BJ (cell line): ENCODE measurements at regions of chr1 and their contacts with region 1.

Region 1: GRCh38 chr1:51926171-51926812 is 47.8 kb upstream of the NRDC start:
- DNase-seq: no peak
- H3K4me3 ChIP-seq: no peak overlapping the region
- H3K27me3 ChIP-seq: no peaks in the 10 kb centered on the region
- CTCF ChIP-seq: peak; percentile 48

Region 2: GRCh38 chr1:51897699-51898031 is 28.6 kb before region 1 on chr1:
- CTCF ChIA-PET with region 1: interaction called, 82 read pairs
- POLR2A ChIA-PET with region 1: interaction called, 10 read pairs
- DNase-seq: peak; percentile 83
- H3K4me3 ChIP-seq: no peak overlapping the region
- H3K27me3 ChIP-seq: no peaks in the 10 kb centered on the region
- CTCF ChIP-seq: no peak

Region 3: GRCh38 chr1:51906306-51907078 is 19.8 kb before region 1 on chr1:
- CTCF ChIA-PET with region 1: interaction called, 10 read pairs
- POLR2A ChIA-PET with region 1: no interaction called
- DNase-seq: no peak
- H3K4me3 ChIP-seq: no peak overlapping the region
- H3K27me3 ChIP-seq: no peaks in the 10 kb centered on the region
- CTCF ChIP-seq: no peak

Region 4: GRCh38 chr1:51915951-51916350 is 10.3 kb before region 1 on chr1:
- CTCF ChIA-PET with region 1: interaction called, 10 read pairs
- POLR2A ChIA-PET with region 1: no interaction called
- DNase-seq: no peak
- H3K4me3 ChIP-seq: no peak overlapping the region
- H3K27me3 ChIP-seq: no peaks in the 10 kb centered on the region
- CTCF ChIP-seq: no peak

Region 5: GRCh38 chr1:52002038-52002917 is 76.0 kb after region 1 on chr1:
- CTCF ChIA-PET with region 1: interaction called, 10 read pairs
- POLR2A ChIA-PET with region 1: no interaction called
- DNase-seq: peak; percentile 63
- H3K4me3 ChIP-seq: no peak overlapping the region
- H3K27me3 ChIP-seq: no peaks in the 10 kb centered on the region
- CTCF ChIP-seq: peak; percentile 87

Region 6: DNA sequence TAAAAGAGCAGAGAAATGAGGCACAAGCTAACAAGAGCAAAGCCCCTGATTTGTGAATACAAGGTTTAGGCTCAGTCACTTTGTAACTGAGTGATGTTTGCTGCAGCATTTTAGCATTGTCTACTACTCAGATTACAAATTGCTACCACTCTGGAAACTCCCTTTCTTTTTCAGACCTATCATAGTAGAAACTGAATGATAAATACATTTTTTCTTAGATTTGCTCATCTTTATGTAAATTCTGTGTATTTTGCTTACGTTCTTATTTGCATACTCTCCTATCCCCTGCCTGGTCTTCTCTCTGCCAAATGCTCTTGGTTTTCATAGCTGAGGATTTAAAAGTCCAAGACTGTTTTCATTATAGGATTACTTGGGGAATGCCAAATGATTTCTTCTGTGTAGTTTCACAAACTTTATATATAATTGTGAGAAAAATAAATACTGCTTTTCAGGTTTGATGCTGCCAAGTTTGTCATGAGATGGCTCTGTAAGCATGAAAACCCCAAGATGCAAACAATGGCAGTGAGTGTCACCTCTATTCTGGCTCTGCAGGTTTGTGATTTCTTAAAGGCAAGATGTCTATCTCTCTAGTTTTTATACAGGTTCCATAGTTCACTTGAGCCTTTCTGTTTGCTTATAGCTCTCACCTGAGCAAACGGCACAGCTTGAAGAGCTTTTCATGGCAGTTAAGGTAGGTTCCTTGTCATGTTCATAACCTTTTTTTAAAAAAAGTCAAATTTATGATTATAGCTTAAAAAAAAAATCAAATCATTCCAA is 941.0 kb after region 1 on chr1:
- CTCF ChIA-PET with region 1: no interaction called
- POLR2A ChIA-PET with region 1: interaction called, 10 read pairs
- DNase-seq: no peak
- H3K4me3 ChIP-seq: no peak overlapping the region
- H3K27me3 ChIP-seq: no peaks in the 10 kb centered on the region
- CTCF ChIP-seq: no peak